ENCODE measurements at regions of chr12 and their contacts with region 1.

Region 1: GRCh38 chr12:96399919-96400797 is at the start of gene CDK17:
- DNase-seq: peak; percentile 90 to 95 (median 95)
- H3K4me3 ChIP-seq: peak within 1 kb of the TSS; percentile 91 to 100 (median 94)
- H3K27ac ChIP-seq: peak within 1 kb of the TSS; percentile 94 to 95
- H3K4me1 ChIP-seq: peaks cover 20 to 44% (median 27%) of the 10 kb centered on the region in 4 experiments
- H3K27me3 ChIP-seq: no peaks in the 10 kb centered on the region

Region 2: DNA sequence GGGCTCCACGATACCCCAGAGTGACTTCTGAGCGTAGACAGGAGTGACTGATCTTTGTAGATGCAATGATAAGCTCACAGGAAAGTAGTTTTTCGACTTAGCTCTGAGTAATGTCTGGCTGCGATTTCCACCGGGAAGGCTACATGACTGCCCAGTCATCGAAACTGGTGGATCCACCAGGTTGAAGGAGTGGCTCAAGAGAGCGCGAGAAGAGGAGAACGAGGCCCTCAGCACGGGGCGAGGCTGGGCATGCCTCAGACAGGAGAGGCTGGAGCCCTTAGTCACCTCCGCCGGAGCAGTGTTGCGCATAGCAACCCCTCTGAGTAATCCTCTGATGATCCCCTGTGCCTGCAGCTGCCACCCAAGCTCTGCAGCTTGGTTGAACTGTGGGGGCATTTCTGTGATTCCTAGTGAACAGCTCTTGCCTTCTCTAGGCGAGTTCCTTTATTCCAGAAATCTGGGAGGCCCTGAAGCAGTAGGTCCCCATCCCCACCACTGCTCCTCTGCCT is 180.4 kb before region 1 on chr12:
- CTCF ChIA-PET with region 1: interaction called, 10 read pairs
- POLR2A ChIA-PET with region 1: no interaction called
- DNase-seq: no peak
- H3K4me3 ChIP-seq: no peak overlapping the region
- H3K27ac ChIP-seq: peak overlapping the region in 1 of 2 experiments; percentile 3
- H3K4me1 ChIP-seq: peaks cover 19 to 43% (median 33%) of the 10 kb centered on the region in 4 experiments
- H3K27me3 ChIP-seq: no peaks in the 10 kb centered on the region

Region 3: GRCh38 chr12:96308881-96309280 is 91.3 kb before region 1 on chr12:
- CTCF ChIA-PET with region 1: interaction called, 45 read pairs
- POLR2A ChIA-PET with region 1: interaction called, 11 read pairs
- DNase-seq: no peak
- H3K4me3 ChIP-seq: no peak overlapping the region
- H3K27ac ChIP-seq: no peak overlapping the region
- H3K4me1 ChIP-seq: no peaks in the 10 kb centered on the region
- H3K27me3 ChIP-seq: no peaks in the 10 kb centered on the region

Region 4: GRCh38 chr12:96383991-96384390 is 16.2 kb before region 1 on chr12:
- CTCF ChIA-PET with region 1: interaction called, 19 read pairs
- POLR2A ChIA-PET with region 1: no interaction called
- DNase-seq: no peak
- H3K4me3 ChIP-seq: no peak overlapping the region
- H3K27ac ChIP-seq: no peak overlapping the region
- H3K4me1 ChIP-seq: peaks cover 5 to 27% (median 16%) of the 10 kb centered on the region in 4 experiments
- H3K27me3 ChIP-seq: no peaks in the 10 kb centered on the region

Region 5: GRCh38 chr12:96489103-96490056 is 89.2 kb after region 1 on chr12 and contains the start of gene CFAP54:
- CTCF ChIA-PET with region 1: interaction called, 18 read pairs
- POLR2A ChIA-PET with region 1: interaction called, 8 read pairs
- DNase-seq: peak; percentile 93 to 96 (median 96)
- H3K4me3 ChIP-seq: peak within 1 kb of the TSS; percentile 76 to 92 (median 84)
- H3K27ac ChIP-seq: peak within 1 kb of the TSS; percentile 38 to 77
- H3K4me1 ChIP-seq: peaks cover 2 to 14% (median 9%) of the 10 kb centered on the region in 4 experiments
- H3K27me3 ChIP-seq: peaks cover 0 to 4% (median 0%) of the 10 kb centered on the region in 5 experiments